ENCODE measurements at regions of chr6 and their contacts with region 1.

Region 1: DNA sequence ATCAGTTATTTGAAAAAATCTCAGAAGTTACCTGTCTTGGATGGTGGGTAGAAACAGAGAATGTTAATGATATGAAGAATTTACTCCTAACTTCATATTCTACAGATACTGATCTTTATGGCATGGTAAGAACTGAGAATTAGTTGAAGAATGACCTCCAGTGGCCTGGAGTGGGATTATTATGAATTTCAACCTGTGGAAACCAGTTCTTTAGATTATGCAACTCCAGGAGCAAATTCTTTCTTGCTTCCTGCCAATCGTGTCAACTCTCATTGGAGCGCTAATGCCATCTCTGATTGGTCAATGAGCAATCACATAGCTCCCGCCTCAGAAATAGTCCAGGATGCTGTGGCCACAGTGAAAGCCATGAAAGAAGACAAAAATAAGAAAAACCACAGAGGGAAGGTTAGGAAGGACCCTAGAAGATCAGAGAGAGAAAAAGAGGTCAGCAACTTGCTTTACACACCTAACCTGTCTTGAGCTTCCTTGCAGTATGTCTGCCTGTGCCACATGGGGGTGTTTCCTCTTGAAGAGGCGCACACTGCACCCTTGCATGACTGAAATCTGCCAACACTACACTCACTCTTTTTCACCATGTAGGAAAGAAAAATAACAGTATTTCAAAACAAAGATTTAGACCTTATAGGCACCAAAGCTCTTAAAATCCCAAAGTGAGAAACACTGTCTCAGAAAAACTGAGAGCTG is 40.4 kb downstream of the LYRM2 start:
- DNase-seq: no peak
- ATAC-seq: peak in 2 of 4 donors; percentile 29 to 38
- H3K4me3 ChIP-seq: no peak overlapping the region
- H3K27ac ChIP-seq: no peak overlapping the region
- H3K4me1 ChIP-seq: peaks cover 0 to 16% (median 5%) of the 10 kb centered on the region in 12 donors
- H3K27me3 ChIP-seq: no peaks in the 10 kb centered on the region
- CTCF ChIP-seq: peak in 7 of 12 donors; percentile 14 to 42 (median 31)
- POLR2A ChIP-seq: no peak

Region 2: GRCh38 chr6:89458704-89459103 is 139.4 kb before region 1 on chr6:
- intact Hi-C with region 1: loop called in 1 of 10 experiments (anchors 10 kb)
- DNase-seq: no peak
- ATAC-seq: no peak
- H3K4me3 ChIP-seq: no peak overlapping the region
- H3K27ac ChIP-seq: no peak overlapping the region
- H3K4me1 ChIP-seq: peaks cover 0 to 3% (median 0%) of the 10 kb centered on the region in 12 donors
- H3K27me3 ChIP-seq: no peaks in the 10 kb centered on the region
- CTCF ChIP-seq: no peak
- POLR2A ChIP-seq: no peak

Region 3: DNA sequence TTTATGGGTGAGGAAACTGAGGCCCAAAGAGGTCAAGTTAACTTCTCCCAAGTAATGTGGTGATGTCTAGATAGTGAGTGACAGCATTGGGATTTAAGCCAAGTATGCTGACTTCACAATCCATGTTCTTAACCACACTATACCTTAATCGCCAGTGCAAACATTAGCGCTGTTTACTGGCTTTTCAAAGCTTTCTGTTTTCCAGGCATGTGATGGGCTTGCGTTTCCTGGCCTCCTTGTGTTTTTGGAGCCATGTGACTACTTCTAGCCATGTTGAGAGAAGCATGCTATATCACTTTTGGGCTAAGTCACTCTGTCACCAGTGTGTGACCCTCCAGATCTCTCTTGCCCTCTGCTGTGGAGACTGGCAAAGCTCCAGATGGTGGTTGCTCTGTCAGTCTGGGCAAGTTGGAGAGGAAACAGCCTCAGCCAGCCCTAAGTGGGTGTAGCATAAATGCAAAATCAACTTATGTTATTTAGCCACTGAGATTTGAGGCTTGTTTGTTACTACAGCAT is 88.3 kb before region 1 on chr6:
- intact Hi-C with region 1: no loop called
- DNase-seq: peak in 2 of 5 donors; percentile 36
- ATAC-seq: peak in 2 of 4 donors; percentile 45 to 66
- H3K4me3 ChIP-seq: no peak overlapping the region
- H3K27ac ChIP-seq: no peak overlapping the region
- H3K4me1 ChIP-seq: peaks cover 0 to 13% (median 5%) of the 10 kb centered on the region in 12 donors
- H3K27me3 ChIP-seq: no peaks in the 10 kb centered on the region
- CTCF ChIP-seq: no peak
- POLR2A ChIP-seq: no peak

Region 4: DNA sequence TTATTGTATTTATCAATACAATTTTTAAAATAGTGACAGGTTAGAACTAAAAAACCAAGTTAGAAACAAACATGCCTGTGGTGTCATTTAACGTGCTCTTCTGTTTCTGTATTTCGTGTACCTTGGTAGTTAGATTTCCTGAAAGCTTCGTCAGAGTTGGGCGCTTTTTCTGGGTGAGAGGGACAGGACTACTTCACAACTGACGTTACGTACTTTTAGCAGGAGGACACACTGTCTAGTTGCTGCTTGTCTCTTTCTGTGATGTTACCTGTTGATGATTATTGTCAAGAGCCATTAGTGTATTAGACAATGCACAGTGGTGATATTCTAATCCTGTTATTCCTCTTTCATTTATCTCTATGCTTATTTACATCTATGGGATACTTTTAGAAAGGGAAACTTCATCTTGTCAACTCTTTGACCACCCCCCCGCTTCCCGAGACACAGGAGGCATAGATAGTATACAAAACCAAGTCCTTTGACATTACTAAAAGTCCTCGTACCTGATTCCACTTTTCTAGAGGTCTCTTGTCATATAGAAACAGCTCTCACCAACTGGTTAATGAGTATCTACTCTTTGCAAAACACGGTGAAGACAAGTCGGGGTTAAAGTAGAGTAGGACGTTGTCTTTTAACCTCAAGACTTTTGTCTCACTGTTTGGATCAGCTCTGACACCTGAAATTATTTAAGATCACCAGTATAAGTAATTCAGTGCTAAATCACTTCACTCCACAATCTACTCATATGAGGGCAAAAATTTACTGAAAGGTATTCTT is 55.9 kb before region 1 on chr6:
- intact Hi-C with region 1: no loop called
- DNase-seq: no peak
- ATAC-seq: no peak
- H3K4me3 ChIP-seq: no peak overlapping the region
- H3K27ac ChIP-seq: no peak overlapping the region
- H3K4me1 ChIP-seq: peaks cover 0 to 5% (median 0%) of the 10 kb centered on the region in 12 donors
- H3K27me3 ChIP-seq: no peaks in the 10 kb centered on the region
- CTCF ChIP-seq: no peak
- POLR2A ChIP-seq: no peak

Region 5: DNA sequence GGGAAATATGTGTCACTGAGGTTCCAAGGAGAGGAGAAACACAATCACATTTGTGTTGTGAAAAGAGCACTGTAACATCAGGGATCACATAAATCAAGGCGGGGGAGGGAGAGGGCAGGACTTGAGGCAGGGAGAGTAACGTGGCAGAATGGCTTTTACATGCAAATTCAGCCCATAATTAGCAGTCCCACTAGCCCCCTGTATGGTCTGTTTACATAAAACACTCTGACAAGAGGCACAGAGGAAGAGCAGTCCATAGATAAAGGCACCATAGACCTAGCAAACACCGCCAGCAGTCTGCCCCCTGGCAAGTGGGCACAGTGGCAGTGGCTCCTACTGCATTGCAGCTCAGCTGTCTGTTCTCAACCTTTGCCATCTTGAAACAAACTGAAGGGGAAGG is 42.3 kb before region 1 on chr6:
- intact Hi-C with region 1: no loop called
- DNase-seq: no peak
- ATAC-seq: no peak
- H3K4me3 ChIP-seq: no peak overlapping the region
- H3K27ac ChIP-seq: no peak overlapping the region
- H3K4me1 ChIP-seq: peaks cover 0 to 6% (median 0%) of the 10 kb centered on the region in 12 donors
- H3K27me3 ChIP-seq: no peaks in the 10 kb centered on the region
- CTCF ChIP-seq: no peak
- POLR2A ChIP-seq: no peak

Region 6: GRCh38 chr6:89829591-89830385 is 231.6 kb after region 1 on chr6 and contains the start of gene CASP8AP2:
- intact Hi-C with region 1: no loop called
- DNase-seq: peak; percentile 93 to 95 (median 94)
- ATAC-seq: peak; percentile 98 to 99 (median 98)
- H3K4me3 ChIP-seq: peak within 1 kb of the TSS; percentile 58 to 99 (median 78)
- H3K27ac ChIP-seq: peak within 1 kb of the TSS; percentile 25 to 87 (median 82)
- H3K4me1 ChIP-seq: peaks cover 0 to 24% (median 10%) of the 10 kb centered on the region in 12 donors
- H3K27me3 ChIP-seq: no peaks in the 10 kb centered on the region
- CTCF ChIP-seq: no peak
- POLR2A ChIP-seq: peak in 1 of 2 donors; percentile 93
- total RNA-seq, gene CASP8AP2: 8.4 to 16.2 (median 12.3) TPM

Measured in heart left ventricle (tissue), 16 donors.